HEK293 (cell line): ENCODE measurements at regions of chr3 and their contacts with region 1.

Region 1: GRCh38 chr3:171772427-171773056 is 37.7 kb downstream of the PLD1 start:
- H3K4me3 ChIP-seq: no peak overlapping the region
- H3K27ac ChIP-seq: no peak overlapping the region
- H3K4me1 ChIP-seq: peaks cover 2% of the 10 kb centered on the region; the same call in 1 of the 2 replicates
- CTCF ChIP-seq: no peak

Region 2: GRCh38 chr3:171646357-171647133 is 126.0 kb before region 1 on chr3:
- CTCF ChIA-PET with region 1: interaction called, 48 read pairs
- POLR2A ChIA-PET with region 1: no interaction called
- H3K4me3 ChIP-seq: no peak overlapping the region
- H3K27ac ChIP-seq: no peak overlapping the region
- H3K4me1 ChIP-seq: no peaks in the 10 kb centered on the region
- CTCF ChIP-seq: no peak

Region 3: DNA sequence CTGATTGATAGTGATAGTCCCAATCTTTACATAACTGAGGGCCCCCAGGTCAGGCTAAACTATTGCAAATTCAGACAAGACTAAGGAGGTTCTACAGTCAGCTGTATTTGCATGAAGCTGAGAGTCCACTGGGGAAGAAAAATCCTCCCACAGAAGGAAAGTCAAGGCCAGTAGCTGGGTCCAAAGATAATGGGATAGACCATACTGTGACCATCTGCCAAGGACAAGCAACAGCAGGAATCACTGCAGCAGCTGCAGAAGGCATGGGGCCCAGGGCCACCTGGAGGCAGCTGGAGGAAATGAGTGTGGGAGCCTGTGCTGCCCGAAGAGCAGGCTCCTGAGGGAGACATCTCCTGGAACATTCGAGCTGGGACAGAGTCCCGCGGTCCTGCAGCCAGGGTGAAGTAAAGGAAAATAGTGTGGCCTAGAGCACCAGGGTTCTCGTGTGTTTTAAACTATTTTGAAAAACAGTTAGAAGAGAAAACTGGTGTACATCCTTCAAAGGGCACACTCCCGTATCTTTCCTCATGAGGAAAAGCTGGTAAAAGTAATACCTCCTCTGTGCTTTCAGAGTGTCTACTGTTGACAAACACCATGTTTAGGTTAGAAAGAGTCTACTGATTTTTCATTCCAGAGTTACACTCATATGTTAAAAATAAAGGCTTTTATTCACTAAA is 57.4 kb after region 1 on chr3:
- CTCF ChIA-PET with region 1: interaction called, 22 read pairs
- POLR2A ChIA-PET with region 1: no interaction called
- H3K4me3 ChIP-seq: no peak overlapping the region
- H3K27ac ChIP-seq: no peak overlapping the region
- H3K4me1 ChIP-seq: peaks cover 6% of the 10 kb centered on the region
- CTCF ChIP-seq: peak; percentile 84; the same call in 1 of the 2 replicates